Activated CD8-positive, alpha-beta T cell treated with anti-CD3 and anti-CD28 coated beads, Interleukin-2, amount 10 ng/mL, durations not matched to agents 7 days and 5 days (primary cell): ENCODE measurements at regions of chr3 and their contacts with region 1.

Region 1: DNA sequence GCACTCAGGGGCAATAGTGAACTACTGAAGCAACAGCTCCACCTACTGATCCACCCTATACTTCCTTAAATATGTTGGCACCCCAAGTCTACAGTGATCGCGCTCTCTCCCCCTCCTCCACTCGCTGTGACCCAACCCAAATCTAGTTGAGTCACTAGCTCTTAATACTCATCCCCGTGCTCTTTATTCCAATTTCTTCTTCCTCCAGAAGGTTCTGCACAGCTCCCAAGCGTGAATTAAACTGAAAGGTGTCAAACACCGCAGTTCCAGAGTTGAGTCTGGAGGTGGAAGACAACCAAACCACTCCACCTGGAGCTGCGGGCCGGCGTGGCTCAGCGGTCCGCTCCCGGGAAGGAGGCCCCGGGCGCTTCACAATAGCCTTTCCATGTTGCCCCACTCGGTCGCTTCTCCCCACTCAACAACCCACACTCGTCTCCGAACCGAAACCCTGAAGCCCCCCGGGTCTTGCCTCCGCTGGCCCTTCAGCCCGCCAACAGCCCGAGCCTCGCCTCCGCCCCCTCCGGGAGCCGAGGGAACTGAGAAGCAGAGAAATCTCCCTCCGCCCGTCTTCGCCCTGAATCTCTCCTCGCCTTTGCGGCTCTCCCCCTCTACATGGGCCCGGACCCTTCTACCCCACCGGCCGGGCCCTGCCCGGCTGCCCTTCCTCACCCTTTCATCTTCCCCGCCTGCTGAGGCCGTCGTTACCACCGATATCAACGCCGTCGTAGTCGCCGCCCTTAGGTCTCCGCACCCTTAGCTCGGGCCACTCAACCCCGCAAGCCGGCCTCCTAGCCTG is 578 bp downstream of the NAA50 start:
- DNase-seq: peak; percentile 88
- ATAC-seq: peak; percentile 74
- H3K4me3 Mint-ChIP-seq: peak overlapping the region; percentile 96
- H3K27ac Mint-ChIP-seq: peak overlapping the region; percentile 100
- H3K4me1 Mint-ChIP-seq: peaks cover 58% of the 10 kb centered on the region
- H3K27me3 Mint-ChIP-seq: no peaks in the 10 kb centered on the region

Region 2: GRCh38 chr3:113166719-113167492 is 578.6 kb before region 1 on chr3:
- CTCF ChIA-PET with region 1: no interaction called
- POLR2A ChIA-PET with region 1: no interaction called
- DNase-seq: no peak
- ATAC-seq: no peak
- H3K4me3 Mint-ChIP-seq: no peak overlapping the region
- H3K27ac Mint-ChIP-seq: no peak overlapping the region
- H3K4me1 Mint-ChIP-seq: no peaks in the 10 kb centered on the region
- H3K27me3 Mint-ChIP-seq: peaks cover 10% of the 10 kb centered on the region

Region 3: GRCh38 chr3:113514265-113514769 is 231.2 kb before region 1 on chr3:
- CTCF ChIA-PET with region 1: interaction called, 7 read pairs
- POLR2A ChIA-PET with region 1: interaction called, 10 read pairs
- DNase-seq: no peak
- ATAC-seq: peak; percentile 5
- H3K4me3 Mint-ChIP-seq: no peak overlapping the region
- H3K27ac Mint-ChIP-seq: no peak overlapping the region
- H3K4me1 Mint-ChIP-seq: peaks cover 11% of the 10 kb centered on the region
- H3K27me3 Mint-ChIP-seq: peaks cover 16% of the 10 kb centered on the region

Region 4: DNA sequence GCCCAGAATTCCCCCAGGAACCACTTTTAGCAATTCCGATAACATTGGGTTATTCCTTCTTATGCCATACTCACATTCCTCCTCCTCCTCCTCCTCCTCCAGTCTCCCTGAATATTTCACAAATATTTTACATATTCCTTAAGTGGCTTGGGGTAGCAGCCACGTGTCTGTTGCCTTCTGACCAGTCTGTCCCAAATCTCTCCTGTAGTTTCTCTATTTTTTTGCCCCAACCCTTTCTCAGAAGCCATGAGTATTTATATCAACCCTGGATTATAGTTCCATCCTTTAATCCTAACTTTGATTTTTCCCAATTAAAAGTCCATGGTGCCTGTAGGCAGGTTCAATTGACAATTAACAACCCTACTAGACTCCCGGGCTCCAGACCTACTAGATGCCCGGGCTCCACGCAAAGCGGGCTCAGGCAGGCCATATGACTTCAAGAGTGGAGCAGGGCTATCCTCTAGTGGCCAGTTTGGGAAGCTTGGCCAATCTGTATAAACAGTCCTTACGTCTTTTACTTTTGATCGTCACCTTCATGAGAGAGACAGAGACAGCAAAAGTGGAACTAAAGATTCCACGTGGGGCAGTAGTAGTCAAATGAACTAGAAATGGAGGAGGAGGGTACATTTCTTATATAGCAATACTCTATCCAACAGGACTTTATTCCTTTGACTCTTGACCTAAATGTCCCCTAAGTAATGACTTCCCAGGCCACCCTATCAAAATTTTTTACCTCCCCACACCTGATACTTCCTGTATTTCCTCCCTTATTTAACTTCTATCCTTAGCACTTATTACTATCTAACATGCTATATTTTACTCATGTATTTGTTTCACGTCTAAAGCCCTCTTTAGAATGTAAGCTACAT is 118.7 kb before region 1 on chr3:
- CTCF ChIA-PET with region 1: interaction called, 11 read pairs
- POLR2A ChIA-PET with region 1: no interaction called
- DNase-seq: peak; percentile 26
- ATAC-seq: no peak
- H3K4me3 Mint-ChIP-seq: no peak overlapping the region
- H3K27ac Mint-ChIP-seq: peak overlapping the region; percentile 1
- H3K4me1 Mint-ChIP-seq: no peaks in the 10 kb centered on the region
- H3K27me3 Mint-ChIP-seq: no peaks in the 10 kb centered on the region

Region 5: GRCh38 chr3:113649174-113649845 is 96.2 kb before region 1 on chr3:
- CTCF ChIA-PET with region 1: no interaction called
- POLR2A ChIA-PET with region 1: no interaction called
- DNase-seq: no peak
- ATAC-seq: no peak
- H3K4me3 Mint-ChIP-seq: no peak overlapping the region
- H3K27ac Mint-ChIP-seq: no peak overlapping the region
- H3K4me1 Mint-ChIP-seq: no peaks in the 10 kb centered on the region
- H3K27me3 Mint-ChIP-seq: no peaks in the 10 kb centered on the region

Region 6: GRCh38 chr3:113676261-113676660 is 69.2 kb before region 1 on chr3:
- CTCF ChIA-PET with region 1: no interaction called
- POLR2A ChIA-PET with region 1: no interaction called
- DNase-seq: no peak
- ATAC-seq: no peak
- H3K4me3 Mint-ChIP-seq: no peak overlapping the region
- H3K27ac Mint-ChIP-seq: no peak overlapping the region
- H3K4me1 Mint-ChIP-seq: no peaks in the 10 kb centered on the region
- H3K27me3 Mint-ChIP-seq: no peaks in the 10 kb centered on the region

Region 7: DNA sequence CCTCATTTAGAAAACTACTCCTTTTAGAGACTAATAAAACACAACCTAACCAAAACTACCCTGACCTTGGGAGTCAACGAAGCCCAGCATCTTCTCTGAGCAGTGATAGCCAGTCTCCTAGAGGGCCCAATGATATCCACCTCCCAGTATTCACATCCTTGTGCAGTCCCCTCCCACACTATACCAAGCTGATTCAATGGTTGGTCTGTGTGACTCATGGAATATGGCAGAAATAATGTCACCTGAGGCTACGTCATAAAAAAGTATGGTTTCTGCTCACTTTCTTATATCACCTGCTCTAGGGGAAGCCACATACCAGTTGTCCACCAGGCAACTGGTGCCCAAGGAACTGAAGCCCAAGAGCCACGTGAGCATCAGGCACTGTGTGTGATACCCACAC is 27.7 kb before region 1 on chr3:
- CTCF ChIA-PET with region 1: interaction called, 10 read pairs
- POLR2A ChIA-PET with region 1: interaction called, 4 read pairs
- DNase-seq: no peak
- ATAC-seq: no peak
- H3K4me3 Mint-ChIP-seq: no peak overlapping the region
- H3K27ac Mint-ChIP-seq: no peak overlapping the region
- H3K4me1 Mint-ChIP-seq: peaks cover 15% of the 10 kb centered on the region
- H3K27me3 Mint-ChIP-seq: no peaks in the 10 kb centered on the region

Region 8: GRCh38 chr3:113912552-113913236 is 167.2 kb after region 1 on chr3:
- CTCF ChIA-PET with region 1: interaction called, 14 read pairs
- POLR2A ChIA-PET with region 1: no interaction called
- DNase-seq: peak; percentile 49
- ATAC-seq: peak; percentile 90
- H3K4me3 Mint-ChIP-seq: peak overlapping the region; percentile 47
- H3K27ac Mint-ChIP-seq: peak overlapping the region; percentile 39
- H3K4me1 Mint-ChIP-seq: peaks cover 3% of the 10 kb centered on the region
- H3K27me3 Mint-ChIP-seq: peaks cover 3% of the 10 kb centered on the region